Thyroid gland (tissue), 4 donors: ENCODE measurements at regions of chr1 and their contacts with region 1.

Region 1: GRCh38 chr1:35451125-35451528 is 106.1 kb downstream of the KIAA0319L start:
- DNase-seq: peak; percentile 83 to 84
- H3K4me3 ChIP-seq: no peak overlapping the region
- H3K27ac ChIP-seq: no peak overlapping the region
- H3K4me1 ChIP-seq: peaks cover 22 to 58% of the 10 kb centered on the region in 2 donors
- H3K27me3 ChIP-seq: no peaks in the 10 kb centered on the region
- CTCF ChIP-seq: peak; percentile 32 to 91 (median 84)
- POLR2A ChIP-seq: no peak

Region 2: DNA sequence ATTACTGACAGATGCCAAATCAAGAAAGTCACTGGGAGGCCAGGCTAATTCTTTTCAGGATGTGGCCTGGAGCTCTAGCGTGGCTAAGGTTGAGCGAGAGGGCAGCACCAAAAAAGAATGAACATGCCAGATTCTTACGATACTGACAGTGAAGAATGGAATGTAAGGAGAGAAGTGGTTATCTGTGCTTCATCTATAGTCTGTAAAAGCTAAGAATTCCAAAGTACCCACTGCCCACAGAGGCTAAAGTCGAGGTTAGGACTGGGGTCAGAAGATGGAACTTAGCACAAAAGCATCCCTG is 154.7 kb after region 1 on chr1:
- intact Hi-C with region 1: no loop called
- DNase-seq: no peak
- H3K4me3 ChIP-seq: no peak overlapping the region
- H3K27ac ChIP-seq: no peak overlapping the region
- H3K4me1 ChIP-seq: no peaks in the 10 kb centered on the region
- H3K27me3 ChIP-seq: no peaks in the 10 kb centered on the region
- CTCF ChIP-seq: no peak
- POLR2A ChIP-seq: no peak

Region 3: DNA sequence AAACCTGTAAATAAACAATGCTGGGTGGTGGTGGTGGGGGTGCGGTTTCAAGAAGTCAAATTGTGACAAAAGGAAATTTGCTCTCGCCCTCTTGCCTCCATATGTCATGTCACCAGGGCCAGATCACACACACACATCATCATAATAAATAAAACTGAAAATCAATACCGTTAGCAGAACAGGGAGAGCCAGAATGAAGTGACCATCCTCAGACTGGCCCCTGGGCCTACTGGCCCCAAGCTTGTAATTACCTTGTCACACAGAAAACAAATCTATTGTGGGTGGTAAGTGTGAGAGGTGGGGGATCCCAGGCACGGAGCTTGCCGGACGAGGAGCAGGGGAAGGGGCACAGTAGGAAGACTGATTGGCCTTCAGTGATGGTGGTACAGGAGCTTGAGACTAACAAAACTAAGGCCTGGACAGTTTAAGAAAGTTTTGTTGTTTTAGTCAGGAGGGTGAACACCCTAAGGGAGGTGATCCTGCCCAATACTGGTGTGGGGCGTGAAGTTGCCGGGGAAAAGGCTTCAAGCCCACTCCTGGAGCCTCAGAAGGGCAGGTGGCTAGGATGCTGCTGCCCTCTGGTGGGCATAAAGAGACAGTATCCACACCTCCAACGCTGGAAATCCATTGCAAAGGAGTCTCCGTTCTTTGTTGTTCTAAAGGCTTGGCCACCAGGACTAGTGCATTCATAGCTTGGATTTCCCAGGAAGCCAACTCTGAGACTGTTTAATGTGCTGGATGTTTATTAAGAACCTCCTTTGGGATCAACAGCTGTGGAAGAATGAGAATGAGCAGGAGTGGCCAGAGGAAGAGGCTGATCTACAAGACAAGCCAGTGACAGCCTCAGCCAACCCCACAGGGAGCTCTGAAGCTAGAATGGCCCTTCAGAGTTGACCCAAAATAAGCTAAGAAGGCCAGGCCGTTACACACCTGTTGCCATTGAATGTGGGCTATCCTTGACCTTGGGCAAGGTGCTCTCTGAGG is 275.6 kb after region 1 on chr1:
- intact Hi-C with region 1: loop called (anchors 5 kb)
- DNase-seq: peak; percentile 57 to 63
- H3K4me3 ChIP-seq: no peak overlapping the region
- H3K27ac ChIP-seq: no peak overlapping the region
- H3K4me1 ChIP-seq: peaks cover 0 to 6% of the 10 kb centered on the region in 2 donors
- H3K27me3 ChIP-seq: no peaks in the 10 kb centered on the region
- CTCF ChIP-seq: peak; percentile 68 to 87 (median 76)
- POLR2A ChIP-seq: no peak

Region 4: GRCh38 chr1:35769759-35770446 is 318.8 kb after region 1 on chr1 and contains the start of gene CLSPN:
- intact Hi-C with region 1: loop called (anchors 10 kb)
- DNase-seq: peak; percentile 96
- H3K4me3 ChIP-seq: peak within 1 kb of the TSS; percentile 65 to 79 (median 66)
- H3K27ac ChIP-seq: peak within 1 kb of the TSS in 2 of 3 donors; percentile 54 to 56
- H3K4me1 ChIP-seq: peaks cover 0 to 4% of the 10 kb centered on the region in 2 donors
- H3K27me3 ChIP-seq: no peaks in the 10 kb centered on the region
- CTCF ChIP-seq: no peak
- POLR2A ChIP-seq: peak in 1 of 2 donors; percentile 8
- total RNA-seq, gene CLSPN: 0.11 to 0.63 (median 0.27) TPM in 3 of 4 donors, not detected in the other